H1 (cell line): ENCODE measurements at regions of chr17 and their contacts with region 1.

Region 1: GRCh38 chr17:41548844-41549595 is 20.9 kb upstream of the KRT19 start:
- DNase-seq: peak; percentile 80 to 95
- H3K4me3 ChIP-seq: peak overlapping the region in 3 of 4 experiments; percentile 13 to 43 (median 16); a peak in 4 of 8 replicates
- H3K27ac ChIP-seq: peak overlapping the region; percentile 64; the same call in 1 of the 2 replicates
- H3K4me1 ChIP-seq: peaks cover 8 to 24% (median 13%) of the 10 kb centered on the region in 4 experiments
- H3K27me3 ChIP-seq: no peaks in the 10 kb centered on the region; a peak in 2 of 7 replicates
- CTCF ChIP-seq: peak; percentile 87 to 97 (median 96)
- EP300 ChIP-seq: peak in 1 of 2 experiments; percentile 51; a peak in 1 of 3 replicates
- POLR2A ChIP-seq: peak in 1 of 2 experiments; percentile 63; a peak in 1 of 3 replicates
- RAD21 ChIP-seq: peak; percentile 91 to 96

Region 2: DNA sequence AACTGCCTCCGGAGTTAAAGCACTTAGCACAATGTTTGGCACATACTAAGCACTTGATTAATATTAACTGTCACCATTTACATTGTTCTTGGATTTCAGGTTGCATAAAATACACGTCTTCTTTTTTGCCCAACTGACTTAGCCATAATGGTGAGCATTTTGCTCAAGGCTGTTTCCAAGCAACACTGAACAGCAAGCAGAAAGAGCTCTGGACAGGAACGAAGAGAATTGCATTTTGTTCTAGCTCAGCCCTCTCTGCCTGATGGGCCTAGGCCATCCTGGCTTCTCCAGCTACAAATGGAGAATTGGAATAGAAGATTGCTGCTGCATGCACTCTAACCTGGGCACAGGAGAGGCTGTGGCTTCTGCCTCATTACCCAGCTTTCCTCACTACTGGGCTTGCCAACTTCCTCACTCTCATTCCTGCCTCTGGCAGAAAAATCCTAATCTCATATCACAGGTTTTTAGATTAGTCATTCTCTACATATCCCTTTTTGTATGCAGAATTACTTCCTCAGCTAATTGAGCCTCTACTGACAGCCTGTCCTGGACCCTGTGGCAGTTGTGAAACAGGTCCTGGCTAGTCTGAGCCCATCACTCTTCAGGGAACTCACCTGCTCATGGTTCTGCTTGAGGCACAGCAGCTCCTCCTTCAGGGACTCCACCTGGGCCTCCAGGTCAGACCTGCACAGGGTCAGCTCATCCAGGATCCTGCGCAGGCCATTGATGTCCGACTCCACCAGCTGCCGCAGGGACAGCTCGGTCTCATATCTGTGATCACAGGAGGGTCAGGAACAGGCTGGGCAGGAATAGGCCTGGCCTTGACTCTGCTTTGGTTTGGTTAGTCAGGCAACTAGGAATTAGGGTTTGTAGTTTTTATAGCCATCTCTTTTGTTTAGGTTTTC is 200.9 kb before region 1 on chr17:
- CTCF ChIA-PET with region 1: interaction called, 10 read pairs
- POLR2A ChIA-PET with region 1: no interaction called
- DNase-seq: no peak
- H3K4me3 ChIP-seq: no peak overlapping the region
- H3K27ac ChIP-seq: no peak overlapping the region
- H3K4me1 ChIP-seq: no peaks in the 10 kb centered on the region
- H3K27me3 ChIP-seq: no peaks in the 10 kb centered on the region
- CTCF ChIP-seq: no peak
- EP300 ChIP-seq: no peak
- POLR2A ChIP-seq: no peak
- RAD21 ChIP-seq: no peak

Region 3: DNA sequence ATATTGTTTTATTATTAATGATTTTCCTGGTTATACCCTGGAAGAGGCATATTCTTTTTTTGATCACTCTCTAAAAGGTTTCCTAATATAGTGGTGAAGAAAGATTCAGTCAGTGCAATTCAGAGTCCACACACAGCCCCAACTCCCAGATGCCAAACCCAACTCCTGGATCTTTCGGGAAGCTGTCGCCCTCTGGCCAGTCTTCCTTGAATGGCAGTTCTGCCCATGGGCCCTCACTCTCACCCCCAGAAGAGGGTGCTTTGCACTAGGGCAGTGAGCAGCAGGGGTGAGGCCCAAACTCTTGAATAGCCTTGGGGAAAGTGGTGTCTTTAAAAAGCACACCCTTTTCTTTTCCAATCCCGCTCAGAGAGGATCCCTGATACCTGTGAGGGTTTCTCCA is 92.8 kb before region 1 on chr17:
- CTCF ChIA-PET with region 1: interaction called, 17 read pairs
- POLR2A ChIA-PET with region 1: no interaction called
- DNase-seq: peak in 1 of 2 experiments; percentile 49
- H3K4me3 ChIP-seq: no peak overlapping the region
- H3K27ac ChIP-seq: no peak overlapping the region
- H3K4me1 ChIP-seq: no peaks in the 10 kb centered on the region
- H3K27me3 ChIP-seq: no peaks in the 10 kb centered on the region
- CTCF ChIP-seq: peak; percentile 45 to 70 (median 58)
- EP300 ChIP-seq: no peak
- POLR2A ChIP-seq: no peak
- RAD21 ChIP-seq: peak; percentile 64 to 70

Region 4: GRCh38 chr17:41530062-41531051 is 18.7 kb before region 1 on chr17:
- CTCF ChIA-PET with region 1: interaction called, 79 read pairs
- POLR2A ChIA-PET with region 1: interaction called, 293 read pairs
- DNase-seq: no peak
- H3K4me3 ChIP-seq: no peak overlapping the region
- H3K27ac ChIP-seq: no peak overlapping the region
- H3K4me1 ChIP-seq: peaks cover 2 to 19% (median 10%) of the 10 kb centered on the region in 4 experiments
- H3K27me3 ChIP-seq: no peaks in the 10 kb centered on the region
- CTCF ChIP-seq: no peak
- EP300 ChIP-seq: no peak
- POLR2A ChIP-seq: no peak
- RAD21 ChIP-seq: no peak

Region 5: GRCh38 chr17:41615454-41615853 is 66.4 kb after region 1 on chr17:
- CTCF ChIA-PET with region 1: interaction called, 20 read pairs
- POLR2A ChIA-PET with region 1: no interaction called
- DNase-seq: peak in 1 of 2 experiments; percentile 31
- H3K4me3 ChIP-seq: no peak overlapping the region
- H3K27ac ChIP-seq: no peak overlapping the region
- H3K4me1 ChIP-seq: peaks cover 0 to 4% (median 2%) of the 10 kb centered on the region in 4 experiments; a peak in 4 of 7 replicates
- H3K27me3 ChIP-seq: no peaks in the 10 kb centered on the region
- CTCF ChIP-seq: peak in 1 of 3 experiments; percentile 14; a peak in 2 of 4 replicates
- EP300 ChIP-seq: no peak
- POLR2A ChIP-seq: no peak
- RAD21 ChIP-seq: peak; percentile 13 to 29; a peak in 3 of 4 replicates

Region 6: GRCh38 chr17:41665566-41666236 is 116.7 kb after region 1 on chr17:
- CTCF ChIA-PET with region 1: interaction called, 279 read pairs
- POLR2A ChIA-PET with region 1: interaction called, 9 read pairs
- DNase-seq: peak in 1 of 2 experiments; percentile 97
- H3K4me3 ChIP-seq: peak overlapping the region; percentile 12 to 67 (median 44); a peak in 7 of 8 replicates
- H3K27ac ChIP-seq: no peak overlapping the region
- H3K4me1 ChIP-seq: peaks cover 0 to 14% (median 6%) of the 10 kb centered on the region in 4 experiments; a peak in 5 of 7 replicates
- H3K27me3 ChIP-seq: no peaks in the 10 kb centered on the region; a peak in 3 of 7 replicates
- CTCF ChIP-seq: peak; percentile 90 to 92 (median 92)
- EP300 ChIP-seq: no peak; a peak in 1 of 3 replicates
- POLR2A ChIP-seq: no peak
- RAD21 ChIP-seq: peak; percentile 42 to 49

Region 7: DNA sequence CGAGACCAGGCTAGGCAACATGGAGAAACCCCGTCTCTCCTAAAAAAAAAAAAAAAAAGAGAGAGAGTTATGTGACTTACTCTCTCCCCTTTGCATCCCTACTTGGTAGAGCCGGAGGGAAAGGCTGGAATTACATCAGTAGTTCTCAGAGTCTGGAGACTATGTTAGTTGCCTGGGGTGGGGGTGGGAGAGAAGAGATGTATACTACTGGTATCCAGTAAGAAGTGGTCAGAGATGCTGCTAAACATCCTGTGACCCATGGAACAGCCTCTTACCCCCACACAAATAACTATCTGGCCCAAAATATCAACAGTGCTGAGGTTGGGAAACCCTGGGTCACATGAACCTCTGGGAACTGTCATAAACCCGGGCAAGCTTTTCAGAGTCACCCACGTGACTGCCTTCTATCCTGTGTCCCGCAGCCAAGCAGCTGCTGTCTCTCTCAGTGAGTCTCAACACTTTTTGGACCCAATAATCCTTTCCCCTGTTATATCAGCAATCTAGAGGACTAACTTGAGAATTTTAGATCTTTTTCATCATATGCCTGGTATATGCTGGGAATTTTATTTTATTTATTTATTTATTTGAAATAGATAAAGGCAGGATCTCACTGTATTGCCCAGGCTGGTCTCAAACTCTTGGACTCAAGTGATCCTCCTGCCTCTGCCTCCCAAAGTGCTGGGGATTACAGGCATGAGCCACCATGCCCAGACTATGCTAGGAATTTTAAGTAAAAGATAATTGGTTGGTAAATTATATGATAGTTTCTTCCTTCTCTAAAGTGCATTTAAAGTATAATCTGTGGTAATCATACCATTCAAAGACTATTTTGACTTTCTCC is 148.3 kb after region 1 on chr17:
- CTCF ChIA-PET with region 1: no interaction called
- POLR2A ChIA-PET with region 1: no interaction called
- DNase-seq: no peak
- H3K4me3 ChIP-seq: no peak overlapping the region
- H3K27ac ChIP-seq: no peak overlapping the region
- H3K4me1 ChIP-seq: no peaks in the 10 kb centered on the region
- H3K27me3 ChIP-seq: peaks cover 0 to 3% (median 0%) of the 10 kb centered on the region in 4 experiments; a peak in 1 of 7 replicates
- CTCF ChIP-seq: no peak
- EP300 ChIP-seq: no peak
- POLR2A ChIP-seq: no peak
- RAD21 ChIP-seq: no peak